ENCODE measurements at regions of chr14 and their contacts with region 1.

Region 1: GRCh38 chr14:70999117-70999516 is 91.9 kb downstream of the PCNX1 start:
- DNase-seq: peak in 1 of 35 experiments; percentile 52
- ATAC-seq: peak; percentile 79 to 95 (median 92)
- H3K4me3 ChIP-seq: peak overlapping the region; percentile 10 to 20
- H3K4me3 Mint-ChIP-seq: peak overlapping the region; percentile 8 to 52 (median 47)
- H3K27ac ChIP-seq: peak overlapping the region; percentile 79
- H3K27ac Mint-ChIP-seq: peak overlapping the region; percentile 76 to 92
- H3K4me1 ChIP-seq: peaks cover 19 to 28% of the 10 kb centered on the region in 2 experiments
- H3K4me1 Mint-ChIP-seq: peaks cover 74 to 88% (median 84%) of the 10 kb centered on the region in 3 donors
- H3K27me3 ChIP-seq: no peaks in the 10 kb centered on the region
- H3K27me3 Mint-ChIP-seq: no peaks in the 10 kb centered on the region

Region 2: GRCh38 chr14:70981000-70981952 is 17.8 kb before region 1 on chr14:
- CTCF ChIA-PET with region 1: interaction called, 3 to 12 read pairs
- POLR2A ChIA-PET with region 1: interaction called, 4 read pairs
- DNase-seq: peak in 1 of 35 experiments; percentile 29
- ATAC-seq: peak; percentile 40 to 71 (median 65)
- H3K4me3 ChIP-seq: no peak overlapping the region
- H3K4me3 Mint-ChIP-seq: peak overlapping the region; percentile 52 to 63 (median 53)
- H3K27ac ChIP-seq: peak overlapping the region; percentile 74
- H3K27ac Mint-ChIP-seq: peak overlapping the region; percentile 83 to 87
- H3K4me1 ChIP-seq: peaks cover 7 to 19% of the 10 kb centered on the region in 2 experiments
- H3K4me1 Mint-ChIP-seq: peaks cover 58 to 70% (median 69%) of the 10 kb centered on the region in 3 donors
- H3K27me3 ChIP-seq: no peaks in the 10 kb centered on the region
- H3K27me3 Mint-ChIP-seq: no peaks in the 10 kb centered on the region

Region 3: GRCh38 chr14:71011479-71011878 is 12.4 kb after region 1 on chr14:
- CTCF ChIA-PET with region 1: interaction called, 3 to 26 read pairs
- POLR2A ChIA-PET with region 1: interaction called, 5 to 7 read pairs
- DNase-seq: peak in 5 of 35 experiments; percentile 3 to 30 (median 18)
- ATAC-seq: no peak
- H3K4me3 ChIP-seq: no peak overlapping the region
- H3K4me3 Mint-ChIP-seq: no peak overlapping the region
- H3K27ac ChIP-seq: no peak overlapping the region
- H3K27ac Mint-ChIP-seq: peak overlapping the region; percentile 23 to 29
- H3K4me1 ChIP-seq: peaks cover 0 to 2% of the 10 kb centered on the region in 2 experiments
- H3K4me1 Mint-ChIP-seq: peaks cover 42 to 57% (median 49%) of the 10 kb centered on the region in 3 donors
- H3K27me3 ChIP-seq: no peaks in the 10 kb centered on the region
- H3K27me3 Mint-ChIP-seq: no peaks in the 10 kb centered on the region

Region 4: DNA sequence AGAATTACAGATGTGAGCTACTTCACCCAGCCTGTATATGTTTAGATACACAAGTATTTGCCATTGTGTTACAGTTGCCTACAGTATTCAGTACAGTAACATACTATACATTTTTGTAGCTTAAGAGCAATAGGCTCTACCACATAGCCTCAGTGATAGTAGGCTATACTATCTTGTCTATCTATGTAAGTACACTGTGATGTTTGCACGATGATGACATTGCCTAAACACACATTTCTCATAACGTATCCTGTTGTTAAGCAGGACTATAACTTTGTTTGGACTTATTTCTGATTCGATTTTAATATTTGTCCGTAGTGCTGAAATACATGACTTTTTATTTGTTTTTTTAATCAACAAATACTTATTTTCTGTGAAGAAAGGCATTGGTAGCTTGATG is 37.3 kb after region 1 on chr14:
- CTCF ChIA-PET with region 1: no interaction called
- POLR2A ChIA-PET with region 1: no interaction called
- DNase-seq: no peak
- ATAC-seq: no peak
- H3K4me3 ChIP-seq: no peak overlapping the region
- H3K4me3 Mint-ChIP-seq: no peak overlapping the region
- H3K27ac ChIP-seq: no peak overlapping the region
- H3K27ac Mint-ChIP-seq: no peak overlapping the region
- H3K4me1 ChIP-seq: no peaks in the 10 kb centered on the region
- H3K4me1 Mint-ChIP-seq: peaks cover 2 to 8% (median 4%) of the 10 kb centered on the region in 3 donors
- H3K27me3 ChIP-seq: no peaks in the 10 kb centered on the region
- H3K27me3 Mint-ChIP-seq: no peaks in the 10 kb centered on the region

Measured in T-cell (primary cell).